ENCODE measurements at regions of chr3 and their contacts with region 1.

Region 1: GRCh38 chr3:56942523-56942922 is 117.9 kb upstream of the SPATA12 start:
- DNase-seq: no peak
- H3K4me3 ChIP-seq: no peak overlapping the region
- H3K4me3 Mint-ChIP-seq: peak overlapping the region; percentile 2 to 82 (median 68)
- H3K27ac ChIP-seq: no peak overlapping the region
- H3K27ac Mint-ChIP-seq: peak overlapping the region; percentile 33 to 93 (median 72)
- H3K4me1 ChIP-seq: peaks cover 24% of the 10 kb centered on the region
- H3K4me1 Mint-ChIP-seq: peaks cover 17 to 35% (median 23%) of the 10 kb centered on the region in 4 donors
- H3K27me3 ChIP-seq: no peaks in the 10 kb centered on the region
- H3K27me3 Mint-ChIP-seq: no peaks in the 10 kb centered on the region

Region 2: DNA sequence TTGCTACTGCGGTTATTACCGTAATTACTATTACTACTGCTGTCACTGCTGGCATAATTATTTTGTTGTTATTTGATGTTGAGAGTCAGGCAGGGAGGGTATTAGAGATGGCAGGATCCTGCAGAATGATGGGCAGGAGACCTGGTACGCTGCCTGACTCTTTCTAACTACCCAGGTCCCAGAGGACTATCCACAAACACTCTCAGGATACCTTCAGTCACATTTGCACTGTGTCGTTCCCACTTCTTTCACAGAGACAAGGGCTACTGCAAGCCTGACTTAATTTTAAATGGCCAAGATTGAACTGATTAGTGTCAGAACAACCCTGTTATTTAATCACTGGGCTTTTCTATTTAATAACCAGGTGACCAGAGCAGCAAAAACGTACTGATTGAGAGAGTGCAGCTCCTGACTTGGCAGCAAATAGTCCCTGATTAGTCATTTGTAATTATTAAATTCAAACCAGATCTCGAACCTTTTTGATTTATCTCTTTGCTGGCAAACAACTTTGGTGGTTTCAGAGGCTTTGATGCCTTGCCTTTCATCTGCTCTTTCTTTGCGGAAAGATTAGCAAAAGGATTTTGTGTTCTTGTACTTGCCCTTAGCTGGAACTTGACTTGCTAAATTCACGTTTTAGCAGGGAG is 52.0 kb before region 1 on chr3:
- CTCF ChIA-PET with region 1: no interaction called
- POLR2A ChIA-PET with region 1: no interaction called
- intact Hi-C with region 1: no loop called
- DNase-seq: peak; percentile 50 to 66 (median 55)
- H3K4me3 ChIP-seq: no peak overlapping the region
- H3K4me3 Mint-ChIP-seq: peak overlapping the region; percentile 36 to 74 (median 66)
- H3K27ac ChIP-seq: no peak overlapping the region
- H3K27ac Mint-ChIP-seq: peak overlapping the region; percentile 10 to 81 (median 69)
- H3K4me1 ChIP-seq: peaks cover 88% of the 10 kb centered on the region
- H3K4me1 Mint-ChIP-seq: peaks cover 67 to 94% (median 81%) of the 10 kb centered on the region in 4 donors
- H3K27me3 ChIP-seq: no peaks in the 10 kb centered on the region
- H3K27me3 Mint-ChIP-seq: no peaks in the 10 kb centered on the region

Region 3: DNA sequence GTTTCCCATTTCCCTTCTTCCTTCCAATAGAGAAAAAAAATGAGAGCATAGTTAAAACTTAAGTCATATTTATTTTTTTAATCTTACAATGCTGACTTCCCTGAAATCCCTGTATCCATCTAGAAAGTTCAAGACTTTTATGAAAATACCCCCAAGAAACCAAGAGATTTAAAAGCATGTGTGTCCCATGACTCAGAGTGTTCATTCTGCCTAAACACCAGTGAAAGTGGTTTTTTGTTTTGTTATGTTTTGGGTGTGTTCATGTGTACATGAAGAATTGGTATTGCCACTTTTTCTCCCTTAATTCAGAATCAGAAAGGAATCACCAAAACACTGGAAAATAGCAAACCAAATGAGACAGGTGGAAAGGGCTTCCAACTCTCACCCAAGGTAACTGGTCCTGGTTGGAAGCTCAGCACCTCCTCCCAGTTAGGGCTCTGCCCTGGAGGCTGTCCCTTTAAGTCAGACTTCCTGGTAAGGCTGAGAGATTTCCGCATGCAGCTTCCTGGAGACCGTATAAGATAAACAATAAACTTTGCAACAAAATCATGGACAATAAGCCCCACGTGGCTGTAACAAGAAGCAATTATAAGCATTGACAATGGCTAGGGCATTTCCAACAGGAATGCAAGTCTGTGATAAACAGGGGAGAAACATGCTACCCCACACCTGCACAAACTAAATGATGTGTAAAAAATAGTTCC is 18.9 kb before region 1 on chr3:
- CTCF ChIA-PET with region 1: no interaction called
- POLR2A ChIA-PET with region 1: interaction called, 10 read pairs
- intact Hi-C with region 1: no loop called
- DNase-seq: peak; percentile 79 to 86 (median 81)
- H3K4me3 ChIP-seq: peak overlapping the region in 1 of 2 donors; percentile 19
- H3K4me3 Mint-ChIP-seq: peak overlapping the region; percentile 45 to 81 (median 76)
- H3K27ac ChIP-seq: peak overlapping the region; percentile 79
- H3K27ac Mint-ChIP-seq: peak overlapping the region; percentile 97 to 100 (median 100)
- H3K4me1 ChIP-seq: peaks cover 96% of the 10 kb centered on the region
- H3K4me1 Mint-ChIP-seq: peaks cover 66 to 87% (median 80%) of the 10 kb centered on the region in 4 donors
- H3K27me3 ChIP-seq: no peaks in the 10 kb centered on the region
- H3K27me3 Mint-ChIP-seq: no peaks in the 10 kb centered on the region